Left cardiac atrium (tissue), 4 donors: ENCODE measurements at regions of chr3 and their contacts with region 1.

Region 1: DNA sequence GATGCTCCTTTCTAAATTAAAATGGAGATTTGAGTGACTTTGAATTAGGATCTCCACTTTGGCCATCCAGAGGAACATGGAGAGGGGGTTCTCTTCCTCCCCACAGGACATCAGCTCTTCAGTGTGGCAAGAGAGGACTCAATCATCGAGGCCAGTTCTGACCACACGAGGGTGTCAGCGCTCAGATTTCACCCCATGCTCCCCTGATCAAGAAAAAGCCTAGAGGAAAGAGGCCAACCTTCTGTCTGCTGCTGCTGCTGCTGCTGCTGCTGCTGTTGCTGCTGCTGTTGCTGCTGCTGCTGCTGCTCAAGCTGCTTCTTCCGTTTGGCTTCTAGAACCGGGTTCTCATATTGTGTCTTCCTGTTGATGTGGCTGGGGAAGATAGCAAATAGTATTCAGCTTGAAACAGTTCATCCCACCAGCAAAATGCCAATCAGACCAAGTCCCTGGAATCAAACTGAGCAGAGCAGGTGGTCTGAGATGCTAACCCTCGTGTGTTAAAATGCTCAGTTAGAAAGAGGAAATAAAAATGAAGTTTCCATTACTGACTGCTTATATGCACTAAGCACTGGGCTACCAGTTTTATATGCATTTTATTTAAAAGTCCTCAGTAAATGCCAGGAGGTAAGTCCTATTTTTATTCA is 599.0 kb downstream of the MAGI1 start:
- DNase-seq: peak; percentile 45
- ATAC-seq: peak; percentile 83 to 88

Region 2: DNA sequence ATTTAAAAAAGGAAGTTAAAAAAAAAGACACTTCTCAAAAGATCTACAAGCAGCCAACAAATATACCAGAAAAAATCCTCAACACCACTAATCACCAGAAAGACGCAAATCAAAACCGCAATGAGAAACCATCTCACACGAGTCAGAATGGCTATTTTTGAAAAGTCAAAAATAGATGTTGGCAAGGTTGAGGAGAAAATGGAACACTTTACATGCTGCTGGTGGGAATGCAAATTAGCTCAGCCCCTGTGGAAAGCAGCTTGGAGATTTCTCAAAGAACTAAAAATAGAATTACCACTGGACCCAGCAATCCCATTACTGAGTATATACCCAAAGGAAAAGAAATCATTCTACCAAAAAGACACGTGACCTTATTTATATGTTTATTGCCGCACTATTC is 177.2 kb before region 1 on chr3:
- intact Hi-C with region 1: no loop called
- DNase-seq: no peak
- ATAC-seq: no peak

Region 3: GRCh38 chr3:65291448-65292105 is 148.2 kb before region 1 on chr3:
- intact Hi-C with region 1: no loop called
- DNase-seq: no peak
- ATAC-seq: no peak

Region 4: DNA sequence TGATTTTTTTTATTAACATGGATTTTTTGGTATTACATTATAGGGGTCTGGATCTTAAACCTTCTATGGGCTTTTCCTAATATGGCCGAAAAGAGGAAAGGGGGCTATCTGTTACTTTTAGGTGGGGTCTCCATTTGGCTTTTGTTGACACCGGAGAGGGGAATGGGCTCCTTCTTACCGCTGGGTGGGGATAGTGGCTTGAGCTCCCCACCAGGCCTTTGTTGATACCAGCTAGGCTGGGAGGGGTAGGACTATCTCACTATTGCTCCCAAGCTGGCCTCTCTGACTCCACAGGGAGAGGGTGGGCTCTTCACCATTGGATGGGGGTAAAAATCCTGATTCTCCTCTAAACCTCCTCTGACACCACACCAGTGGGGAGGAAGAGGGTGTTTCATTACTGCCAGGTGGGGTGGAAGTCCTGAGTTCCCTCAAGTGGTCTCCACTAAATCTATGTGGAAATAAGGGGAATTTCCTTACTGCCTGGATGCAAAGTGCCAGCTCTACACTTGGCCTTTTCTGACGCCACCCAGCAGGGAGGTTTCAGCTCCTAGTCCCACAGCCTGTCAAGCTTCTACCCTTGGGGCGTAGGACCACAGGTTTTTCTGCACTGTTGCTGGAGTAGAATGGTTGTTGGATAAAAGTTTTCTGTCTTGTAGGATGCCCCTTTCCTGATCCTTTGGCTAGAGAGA is 26.7 kb after region 1 on chr3:
- intact Hi-C with region 1: no loop called
- DNase-seq: no peak
- ATAC-seq: no peak

Region 5: GRCh38 chr3:65672871-65673815 is 233.4 kb after region 1 on chr3:
- intact Hi-C with region 1: loop called in 1 of 2 experiments (anchors 5 kb)
- DNase-seq: peak; percentile 64
- ATAC-seq: peak in 1 of 2 donors; percentile 22

Region 6: GRCh38 chr3:65732051-65732935 is 292.5 kb after region 1 on chr3:
- intact Hi-C with region 1: loop called (anchors 2 to 5 kb)
- DNase-seq: no peak
- ATAC-seq: peak; percentile 62 to 82

Region 7: GRCh38 chr3:66195347-66195783 is 755.6 kb after region 1 on chr3:
- intact Hi-C with region 1: loop called in 1 of 2 experiments (anchors 5 kb)
- DNase-seq: peak; percentile 68
- ATAC-seq: peak; percentile 77 to 84